HepG2 (cell line): ENCODE measurements at regions of chr10 and their contacts with region 1.

Region 1: DNA sequence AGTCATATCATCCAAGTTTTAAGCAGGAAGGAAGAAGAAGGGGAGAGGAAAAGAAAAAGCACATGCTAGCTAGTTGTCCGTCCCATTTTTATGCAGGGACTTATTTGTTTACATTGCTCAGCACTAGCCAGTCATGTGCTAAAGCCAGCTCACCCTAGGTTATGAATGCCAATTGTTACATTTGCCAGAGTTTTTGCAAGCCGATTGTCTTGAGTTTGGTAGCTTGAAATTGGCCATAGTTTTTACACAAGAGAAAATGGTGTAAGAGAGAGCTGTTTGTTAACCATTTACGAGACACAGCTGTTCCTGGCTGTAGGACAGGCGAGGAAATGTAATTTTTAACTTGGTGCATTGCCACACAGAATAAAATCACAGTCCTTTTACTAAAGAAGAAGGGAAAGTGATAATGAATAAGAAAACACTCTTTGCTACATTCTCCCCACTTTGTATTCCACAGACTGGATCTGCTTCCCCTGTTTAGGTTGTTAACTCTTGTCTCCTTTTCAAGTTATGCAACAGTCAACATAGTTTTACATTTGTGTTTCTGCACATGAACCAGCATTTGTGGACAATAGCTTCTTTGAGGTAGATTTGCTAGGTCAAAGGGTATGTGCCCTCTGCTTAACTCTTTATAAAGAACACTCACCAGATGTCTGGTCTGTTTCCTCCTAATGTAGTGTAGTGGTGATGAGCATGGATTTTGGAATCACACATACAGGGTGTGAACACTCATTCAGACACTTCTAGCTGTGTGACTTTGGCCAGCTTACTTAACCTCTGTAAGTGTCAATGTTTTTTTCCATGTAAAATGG is 357.2 kb downstream of the LRMDA start:
- DNase-seq: peak; percentile 94
- ATAC-seq: peak; percentile 88
- H3K4me3 ChIP-seq: peak overlapping the region in 2 of 3 experiments; percentile 21 to 42; a peak in 2 of 6 replicates
- H3K27ac ChIP-seq: peak overlapping the region; percentile 85
- H3K4me1 ChIP-seq: peaks cover 58% of the 10 kb centered on the region
- H3K27me3 ChIP-seq: no peaks in the 10 kb centered on the region
- CTCF ChIP-seq: no peak
- EP300 ChIP-seq: peak; percentile 45 to 87; a peak in 2 of 4 replicates
- POLR2A ChIP-seq: no peak
- RAD21 ChIP-seq: no peak; the same call in 1 of the 2 replicates

Region 2: GRCh38 chr10:75568450-75569130 is 220.0 kb before region 1 on chr10:
- CTCF ChIA-PET with region 1: no interaction called
- POLR2A ChIA-PET with region 1: no interaction called
- in situ Hi-C with region 1: no loop called
- intact Hi-C with region 1: no loop called
- DNase-seq: no peak
- ATAC-seq: no peak
- H3K4me3 ChIP-seq: no peak overlapping the region
- H3K27ac ChIP-seq: no peak overlapping the region
- H3K4me1 ChIP-seq: no peaks in the 10 kb centered on the region
- H3K27me3 ChIP-seq: no peaks in the 10 kb centered on the region
- CTCF ChIP-seq: no peak
- EP300 ChIP-seq: no peak
- POLR2A ChIP-seq: no peak
- RAD21 ChIP-seq: no peak

Region 3: GRCh38 chr10:75755528-75755927 is 33.1 kb before region 1 on chr10:
- CTCF ChIA-PET with region 1: no interaction called
- POLR2A ChIA-PET with region 1: interaction called, 11 read pairs
- in situ Hi-C with region 1: no loop called
- intact Hi-C with region 1: no loop called
- DNase-seq: peak; percentile 69
- ATAC-seq: peak; percentile 99
- H3K4me3 ChIP-seq: no peak overlapping the region
- H3K27ac ChIP-seq: peak overlapping the region; percentile 61
- H3K4me1 ChIP-seq: peaks cover 43% of the 10 kb centered on the region
- H3K27me3 ChIP-seq: no peaks in the 10 kb centered on the region
- CTCF ChIP-seq: no peak
- EP300 ChIP-seq: peak in 1 of 2 experiments; percentile 95; a peak in 2 of 4 replicates
- POLR2A ChIP-seq: 0 out of 4 replicates have a peak, but pooled peaks of 1 of the 2 experiments have one; percentile 42
- RAD21 ChIP-seq: no peak

Region 4: GRCh38 chr10:75838486-75838885 is 49.9 kb after region 1 on chr10:
- CTCF ChIA-PET with region 1: no interaction called
- POLR2A ChIA-PET with region 1: no interaction called
- in situ Hi-C with region 1: no loop called
- intact Hi-C with region 1: no loop called
- DNase-seq: no peak
- ATAC-seq: no peak
- H3K4me3 ChIP-seq: no peak overlapping the region
- H3K27ac ChIP-seq: no peak overlapping the region
- H3K4me1 ChIP-seq: no peaks in the 10 kb centered on the region
- H3K27me3 ChIP-seq: no peaks in the 10 kb centered on the region
- CTCF ChIP-seq: no peak
- EP300 ChIP-seq: no peak
- POLR2A ChIP-seq: no peak
- RAD21 ChIP-seq: no peak

Region 5: DNA sequence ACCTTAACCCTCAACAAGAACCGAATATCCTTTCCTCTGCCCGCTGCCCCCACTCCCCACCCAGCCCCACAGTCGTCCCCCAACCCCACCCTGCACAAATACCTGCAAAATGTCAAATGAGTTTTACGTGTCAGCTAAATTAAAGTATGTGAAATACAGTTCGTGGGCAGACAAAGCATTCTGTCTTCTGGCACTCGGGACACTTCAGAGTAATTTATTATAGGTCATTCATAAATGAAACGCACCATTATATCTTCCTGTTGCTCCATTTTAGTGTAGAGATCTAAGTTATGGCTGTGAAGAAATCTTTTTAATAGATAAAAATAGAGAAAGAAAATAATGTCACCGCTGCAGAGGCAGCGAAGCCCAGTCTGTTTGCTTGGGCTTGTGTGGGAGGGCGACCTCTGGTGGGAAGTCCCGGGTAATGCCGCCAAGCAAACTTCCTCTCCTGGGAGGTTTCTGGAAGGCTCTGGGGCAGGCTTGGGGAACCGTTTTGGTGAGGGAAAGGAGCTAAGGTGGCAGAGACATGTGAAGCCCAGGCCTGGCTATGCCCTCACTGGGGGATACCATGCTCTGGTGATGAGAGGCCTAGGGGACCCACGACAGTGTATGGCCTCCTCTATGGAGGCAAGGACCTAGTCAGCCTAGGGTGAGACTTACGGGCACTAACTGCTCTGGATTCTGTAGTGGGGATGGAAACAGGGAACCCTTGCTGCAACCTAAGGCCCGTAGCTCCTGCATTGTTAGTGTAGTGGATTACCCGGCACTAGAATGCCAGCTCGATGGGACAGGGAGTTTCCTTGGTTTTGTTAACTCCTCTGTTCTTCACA is 247.7 kb after region 1 on chr10:
- CTCF ChIA-PET with region 1: no interaction called
- POLR2A ChIA-PET with region 1: interaction called, 21 read pairs
- in situ Hi-C with region 1: no loop called
- intact Hi-C with region 1: no loop called
- DNase-seq: no peak
- ATAC-seq: 0 out of 3 replicates have a peak, but pooled peaks have one; percentile 15
- H3K4me3 ChIP-seq: no peak overlapping the region
- H3K27ac ChIP-seq: peak overlapping the region; percentile 97
- H3K4me1 ChIP-seq: peaks cover 57% of the 10 kb centered on the region
- H3K27me3 ChIP-seq: no peaks in the 10 kb centered on the region; a peak in 1 of 5 replicates
- CTCF ChIP-seq: peak; percentile 85
- EP300 ChIP-seq: no peak
- POLR2A ChIP-seq: no peak
- RAD21 ChIP-seq: peak; percentile 79